Panc1 (cell line): ENCODE measurements at regions of chr2 and their contacts with region 1.

Region 1: GRCh38 chr2:41579806-41580205 is 468.0 kb upstream of the PKDCC start:
- DNase-seq: no peak
- ATAC-seq: no peak
- H3K4me3 ChIP-seq: no peak overlapping the region
- H3K27ac ChIP-seq: no peak overlapping the region
- H3K4me1 ChIP-seq: no peaks in the 10 kb centered on the region
- H3K27me3 ChIP-seq: no peaks in the 10 kb centered on the region
- CTCF ChIP-seq: no peak

Region 2: DNA sequence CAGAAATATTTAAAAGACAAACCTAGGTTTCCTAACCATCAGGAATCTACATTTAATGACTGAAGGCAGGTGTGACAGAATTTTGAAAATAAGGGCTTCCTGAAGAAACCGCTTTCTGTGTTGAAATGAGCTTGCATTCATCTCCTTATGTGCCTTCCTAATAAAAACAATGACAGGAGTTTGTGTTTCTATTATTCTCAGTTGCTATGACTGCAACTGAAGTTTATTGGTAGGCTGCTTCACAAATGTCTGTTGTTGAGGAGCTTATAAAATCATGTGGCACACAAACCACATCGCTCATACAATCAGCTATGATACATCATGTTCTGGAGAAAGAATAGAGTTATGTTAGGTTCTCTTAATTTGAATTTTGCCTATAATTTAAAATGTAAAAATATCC is 765.2 kb before region 1 on chr2:
- CTCF ChIA-PET with region 1: no interaction called
- POLR2A ChIA-PET with region 1: no interaction called
- in situ Hi-C with region 1: no loop called
- intact Hi-C with region 1: loop called (anchors 5 kb)
- DNase-seq: no peak
- ATAC-seq: no peak
- H3K4me3 ChIP-seq: no peak overlapping the region
- H3K27ac ChIP-seq: no peak overlapping the region
- H3K4me1 ChIP-seq: no peaks in the 10 kb centered on the region
- H3K27me3 ChIP-seq: no peaks in the 10 kb centered on the region
- CTCF ChIP-seq: no peak